ENCODE measurements at regions of chr1 and their contacts with region 1.

Region 1: DNA sequence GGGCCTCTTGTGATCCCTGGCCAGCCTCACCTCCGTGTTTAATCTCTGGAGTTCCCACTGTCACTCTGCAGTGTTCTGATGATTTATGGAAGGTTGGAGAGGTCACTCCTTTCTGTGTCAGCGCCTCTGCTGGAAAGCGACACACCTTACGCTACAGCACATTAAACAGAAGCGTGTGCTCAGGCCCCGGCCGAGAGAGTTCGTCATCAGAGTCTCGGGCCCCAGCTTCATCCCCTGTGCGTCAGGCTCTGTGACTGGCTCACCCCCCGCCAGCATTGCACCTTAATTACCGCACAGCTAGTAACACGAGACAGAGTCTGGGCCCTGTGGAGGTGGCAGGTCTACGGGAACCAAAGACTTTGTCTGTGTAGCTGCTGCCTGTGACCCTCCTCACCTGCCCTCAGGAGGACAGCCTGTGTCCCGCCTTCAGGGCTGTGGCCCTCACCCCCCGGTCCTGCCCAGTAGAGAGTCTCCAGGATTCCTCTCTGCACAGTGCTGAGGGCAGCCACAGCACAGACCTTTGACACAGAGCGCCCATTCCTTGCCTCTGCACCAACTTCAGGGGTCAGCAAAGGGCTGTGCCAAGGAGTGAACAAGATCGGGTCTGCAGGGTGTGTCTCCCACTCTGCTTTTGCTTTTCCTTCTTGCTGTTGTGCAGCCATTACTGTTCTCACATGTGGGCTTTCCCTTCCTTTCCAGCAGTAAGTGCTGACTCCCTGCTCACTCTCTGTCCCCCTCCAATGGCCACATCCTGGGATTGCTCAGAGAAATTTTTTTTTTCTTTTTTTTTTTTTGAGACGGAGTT is 157.6 kb downstream of the PGBD5 start:
- DNase-seq: peak; percentile 65
- H3K4me3 Mint-ChIP-seq: no peak overlapping the region
- H3K27ac Mint-ChIP-seq: peak overlapping the region; percentile 81
- H3K4me1 Mint-ChIP-seq: peaks cover 29% of the 10 kb centered on the region
- H3K27me3 Mint-ChIP-seq: no peaks in the 10 kb centered on the region

Region 2: GRCh38 chr1:230104395-230105244 is 163.9 kb before region 1 on chr1:
- intact Hi-C with region 1: loop called (anchors 10 kb)
- DNase-seq: peak; percentile 84
- H3K4me3 Mint-ChIP-seq: peak overlapping the region; percentile 77
- H3K27ac Mint-ChIP-seq: peak overlapping the region; percentile 88
- H3K4me1 Mint-ChIP-seq: peaks cover 81% of the 10 kb centered on the region
- H3K27me3 Mint-ChIP-seq: no peaks in the 10 kb centered on the region

Region 3: DNA sequence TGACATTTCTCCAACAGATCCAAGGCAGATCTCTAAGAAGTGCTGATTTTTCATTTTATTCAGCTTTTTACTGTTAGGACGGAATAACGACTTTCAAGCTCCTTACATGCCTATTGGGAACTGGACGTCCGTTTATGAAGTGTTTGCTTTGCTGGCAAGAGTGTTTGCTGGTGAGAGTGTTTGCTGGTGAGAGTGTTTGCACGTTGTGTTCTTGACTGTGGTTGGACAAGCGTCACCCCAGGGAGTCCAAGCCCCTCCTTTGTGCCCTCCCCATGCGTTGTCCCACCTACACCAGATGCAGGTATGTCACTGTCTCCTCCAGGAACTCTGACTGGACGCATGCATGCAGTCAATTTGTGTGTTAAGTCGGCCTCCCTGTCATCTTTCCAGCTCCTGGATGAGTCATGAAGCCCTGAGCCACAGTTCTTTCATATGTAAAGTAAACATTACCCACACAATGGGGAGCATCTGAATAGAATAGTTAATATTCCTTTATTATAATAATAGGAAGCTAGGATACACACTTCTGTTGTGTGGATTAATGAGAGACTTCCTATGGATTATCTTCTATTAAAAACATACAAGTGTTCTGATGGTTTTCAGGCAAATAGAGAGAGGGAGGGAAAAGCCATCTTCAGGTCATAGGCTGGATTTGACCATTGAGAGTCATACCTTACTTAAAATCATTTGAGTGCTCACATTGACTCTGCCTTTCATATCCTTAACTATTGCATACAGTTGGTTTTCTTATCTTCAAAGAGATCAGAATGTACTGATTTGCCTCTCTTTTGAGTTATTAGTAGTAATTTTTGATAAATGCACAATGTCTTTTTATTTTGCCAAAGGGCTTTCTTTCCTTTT is 82.3 kb before region 1 on chr1:
- intact Hi-C with region 1: loop called (anchors 2 kb)
- DNase-seq: no peak
- H3K4me3 Mint-ChIP-seq: peak overlapping the region; percentile 36
- H3K27ac Mint-ChIP-seq: peak overlapping the region; percentile 80
- H3K4me1 Mint-ChIP-seq: peaks cover 48% of the 10 kb centered on the region
- H3K27me3 Mint-ChIP-seq: no peaks in the 10 kb centered on the region

Region 4: GRCh38 chr1:230243583-230244353 is 24.8 kb before region 1 on chr1:
- intact Hi-C with region 1: loop called (anchors 2 kb)
- DNase-seq: no peak
- H3K4me3 Mint-ChIP-seq: no peak overlapping the region
- H3K27ac Mint-ChIP-seq: peak overlapping the region; percentile 68
- H3K4me1 Mint-ChIP-seq: peaks cover 40% of the 10 kb centered on the region
- H3K27me3 Mint-ChIP-seq: no peaks in the 10 kb centered on the region

Region 5: DNA sequence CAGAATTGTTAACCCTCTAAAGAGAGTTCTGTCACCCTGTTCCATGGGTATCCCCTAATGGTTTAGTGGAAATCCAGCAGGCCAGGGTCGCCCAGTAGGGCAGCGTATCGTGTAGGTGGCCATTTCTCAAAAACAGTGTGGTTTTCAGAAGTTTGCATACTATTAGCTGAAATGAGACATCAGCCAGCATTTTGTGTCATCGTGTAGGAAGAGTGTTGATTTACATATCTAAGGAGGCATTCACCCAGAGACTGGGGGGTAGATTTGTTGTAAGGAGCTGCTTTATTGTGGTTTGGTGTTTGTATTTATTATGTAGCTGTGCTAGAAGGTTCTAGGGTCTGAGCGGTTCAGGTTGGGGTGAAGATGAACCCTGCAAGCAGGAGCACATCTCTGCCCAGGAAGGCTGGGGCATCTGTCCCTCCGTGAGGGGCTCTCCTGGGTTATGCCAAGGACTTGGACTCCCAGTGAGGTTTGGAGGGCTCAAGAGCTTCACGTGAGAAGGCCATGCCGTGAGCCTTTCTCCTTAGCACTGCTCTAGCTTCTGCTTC is 16.9 kb before region 1 on chr1:
- intact Hi-C with region 1: loop called (anchors 2 kb)
- DNase-seq: no peak
- H3K4me3 Mint-ChIP-seq: no peak overlapping the region
- H3K27ac Mint-ChIP-seq: peak overlapping the region; percentile 82
- H3K4me1 Mint-ChIP-seq: peaks cover 20% of the 10 kb centered on the region
- H3K27me3 Mint-ChIP-seq: no peaks in the 10 kb centered on the region

Region 6: DNA sequence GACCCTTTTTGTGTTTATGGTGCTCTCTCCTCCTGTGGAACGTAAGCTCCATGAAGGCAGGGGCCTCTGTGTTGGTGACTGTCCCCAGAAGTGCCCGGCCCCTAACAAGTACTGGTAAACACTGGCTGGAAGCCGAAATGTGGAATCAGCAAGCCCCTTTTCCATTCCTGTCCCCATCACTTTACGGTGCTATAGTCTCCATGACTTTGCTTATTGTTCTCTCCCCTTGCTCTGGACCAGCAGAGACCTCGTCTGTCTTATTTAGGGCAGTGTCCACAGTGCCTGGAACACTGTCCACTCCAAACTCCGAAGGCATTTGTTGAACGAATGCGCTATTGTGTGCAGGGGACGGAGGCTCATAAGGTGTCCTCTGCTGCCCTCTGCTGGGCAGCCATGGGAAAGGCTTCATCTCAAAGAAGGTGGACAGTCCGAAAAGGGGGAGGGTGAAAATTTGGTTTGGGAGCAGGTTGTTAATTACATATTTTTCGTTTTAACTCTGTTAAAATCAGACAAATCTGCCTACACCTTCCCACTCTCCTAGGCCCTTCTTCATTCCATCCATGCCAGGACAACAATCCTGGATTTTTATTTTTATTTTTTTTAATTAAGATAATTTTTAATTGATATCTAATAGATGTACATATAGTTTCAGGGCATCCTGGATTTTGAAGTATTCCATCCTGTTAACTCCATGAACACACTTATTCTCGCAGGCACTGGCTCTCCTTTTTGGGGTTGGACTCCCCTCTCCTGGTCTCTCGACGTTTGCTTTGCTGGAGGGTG is 42.0 kb after region 1 on chr1:
- intact Hi-C with region 1: loop called (anchors 5 kb)
- DNase-seq: peak; percentile 86
- H3K4me3 Mint-ChIP-seq: no peak overlapping the region
- H3K27ac Mint-ChIP-seq: no peak overlapping the region
- H3K4me1 Mint-ChIP-seq: peaks cover 10% of the 10 kb centered on the region
- H3K27me3 Mint-ChIP-seq: peaks cover 10% of the 10 kb centered on the region

Region 7: GRCh38 chr1:230415405-230416132 is 147.0 kb after region 1 on chr1:
- intact Hi-C with region 1: no loop called
- DNase-seq: no peak
- H3K4me3 Mint-ChIP-seq: no peak overlapping the region
- H3K27ac Mint-ChIP-seq: no peak overlapping the region
- H3K4me1 Mint-ChIP-seq: no peaks in the 10 kb centered on the region
- H3K27me3 Mint-ChIP-seq: peaks cover 9% of the 10 kb centered on the region

Region 8: GRCh38 chr1:230501849-230502248 is 233.3 kb after region 1 on chr1:
- intact Hi-C with region 1: no loop called
- DNase-seq: no peak
- H3K4me3 Mint-ChIP-seq: no peak overlapping the region
- H3K27ac Mint-ChIP-seq: no peak overlapping the region
- H3K4me1 Mint-ChIP-seq: no peaks in the 10 kb centered on the region
- H3K27me3 Mint-ChIP-seq: peaks cover 7% of the 10 kb centered on the region

Measured in activated CD4-positive, alpha-beta T cell treated with anti-CD3 and anti-CD28 coated beads, Interleukin-2, amount 10 ng/mL, durations not matched to agents 24 days and 14 days (primary cell).